Stomach (tissue), 19 donors: ENCODE measurements at regions of chr17 and their contacts with region 1.

Region 1: GRCh38 chr17:38428112-38428642 is at the start of gene ARHGAP23:
- DNase-seq: peak; percentile 64 to 80
- H3K4me3 ChIP-seq: peak within 1 kb of the TSS; percentile 77 to 94 (median 86)
- H3K27ac ChIP-seq: peak within 1 kb of the TSS; percentile 74 to 94 (median 88)
- H3K4me1 ChIP-seq: peaks cover 18 to 68% (median 41%) of the 10 kb centered on the region in 4 donors
- H3K27me3 ChIP-seq: no peaks in the 10 kb centered on the region
- CTCF ChIP-seq: no peak
- EP300 ChIP-seq: no peak
- POLR2A ChIP-seq: no peak
- total RNA-seq, gene ARHGAP23: 23.9 to 55.5 (median 30.1) TPM

Region 2: DNA sequence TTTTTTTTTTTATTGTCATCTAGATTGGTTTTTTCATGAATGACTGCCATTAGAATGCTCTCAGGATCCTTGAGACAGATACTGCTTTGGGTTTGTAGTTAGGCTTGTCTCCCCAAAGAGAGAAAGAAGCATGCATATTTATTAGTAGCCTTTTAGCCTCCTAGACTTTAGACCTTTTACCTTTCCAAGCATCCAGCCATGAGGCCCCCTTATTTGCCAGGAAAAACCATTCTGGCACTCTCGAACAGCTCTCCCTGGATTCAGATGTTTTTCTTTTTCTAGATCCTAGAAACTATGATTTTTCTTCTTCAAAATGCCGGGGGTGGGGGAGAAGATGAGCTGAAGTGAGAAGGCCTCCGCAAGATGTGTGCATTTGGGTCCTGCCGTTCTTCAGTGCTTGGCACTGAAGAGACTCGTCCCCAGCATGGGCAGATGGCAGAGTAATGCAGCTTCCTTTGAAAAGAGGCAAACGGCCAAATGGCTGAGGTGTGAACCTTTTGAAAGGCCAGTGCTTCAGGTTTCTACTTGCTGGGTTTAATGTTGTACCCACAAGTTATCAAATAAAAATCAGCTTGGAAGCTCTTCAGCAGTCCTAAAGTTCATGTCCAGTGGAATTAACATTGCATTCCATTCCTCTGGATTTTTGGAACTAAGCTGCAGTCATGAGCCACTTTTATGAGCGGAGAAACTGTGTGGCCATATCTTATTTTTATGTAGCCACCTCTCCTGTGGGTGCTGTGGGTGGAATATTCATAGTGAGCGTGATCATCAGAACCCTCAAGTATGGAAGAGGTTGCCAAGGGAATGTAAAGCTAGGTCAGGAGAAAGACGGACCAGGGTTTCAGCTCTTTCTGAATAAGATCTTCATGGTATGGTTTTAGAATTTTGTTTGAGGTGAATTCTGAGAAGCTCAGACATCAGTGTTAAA is 69.3 kb before region 1 on chr17:
- intact Hi-C with region 1: no loop called
- DNase-seq: no peak
- H3K4me3 ChIP-seq: no peak overlapping the region
- H3K27ac ChIP-seq: peak overlapping the region in 1 of 5 donors; percentile 52
- H3K4me1 ChIP-seq: peaks cover 16 to 60% (median 38%) of the 10 kb centered on the region in 4 donors
- H3K27me3 ChIP-seq: no peaks in the 10 kb centered on the region
- CTCF ChIP-seq: no peak
- EP300 ChIP-seq: no peak
- POLR2A ChIP-seq: no peak

Region 3: GRCh38 chr17:38469875-38470274 is 41.7 kb after region 1 on chr17:
- intact Hi-C with region 1: loop called (anchors 10 kb)
- DNase-seq: peak in 1 of 2 donors; percentile 42
- H3K4me3 ChIP-seq: no peak overlapping the region
- H3K27ac ChIP-seq: peak overlapping the region in 1 of 5 donors; percentile 38
- H3K4me1 ChIP-seq: peaks cover 17 to 81% (median 47%) of the 10 kb centered on the region in 4 donors
- H3K27me3 ChIP-seq: no peaks in the 10 kb centered on the region
- CTCF ChIP-seq: no peak
- EP300 ChIP-seq: no peak
- POLR2A ChIP-seq: no peak